Breast epithelium (tissue), 4 donors: ENCODE measurements at regions of chr10 and their contacts with region 1.

Region 1: DNA sequence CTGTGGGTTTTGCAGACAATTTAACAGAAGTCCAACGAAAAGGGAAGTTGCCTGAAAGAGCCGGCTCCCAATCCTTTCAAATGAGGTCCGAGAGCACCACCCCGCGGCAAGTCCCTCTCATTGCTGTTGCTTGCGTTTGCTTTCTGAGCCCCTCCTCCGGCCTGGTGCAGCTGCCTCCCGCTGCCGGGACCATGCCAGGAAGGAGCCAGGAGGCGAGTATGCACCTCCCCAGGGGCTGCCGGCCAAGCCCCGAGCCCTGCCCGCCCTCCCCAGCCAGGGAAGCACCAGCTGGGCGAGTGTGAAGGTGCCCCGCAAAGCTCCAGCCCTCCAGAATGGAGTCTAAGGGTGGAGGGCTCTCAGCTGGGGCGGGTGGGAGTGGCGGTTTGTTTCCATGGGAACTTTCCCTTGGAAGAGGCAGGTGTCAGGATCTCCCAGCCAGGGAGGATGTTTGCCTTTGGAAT is 25.8 kb upstream of the PPP2R2D start:
- DNase-seq: peak; percentile 45 to 76
- H3K4me3 ChIP-seq: peak overlapping the region in 1 of 3 donors; percentile 35
- H3K27ac ChIP-seq: no peak overlapping the region
- H3K4me1 ChIP-seq: no peaks in the 10 kb centered on the region
- H3K27me3 ChIP-seq: peaks cover 0 to 36% of the 10 kb centered on the region in 2 donors
- CTCF ChIP-seq: peak in 2 of 3 donors; percentile 45 to 53
- POLR2A ChIP-seq: no peak

Region 2: DNA sequence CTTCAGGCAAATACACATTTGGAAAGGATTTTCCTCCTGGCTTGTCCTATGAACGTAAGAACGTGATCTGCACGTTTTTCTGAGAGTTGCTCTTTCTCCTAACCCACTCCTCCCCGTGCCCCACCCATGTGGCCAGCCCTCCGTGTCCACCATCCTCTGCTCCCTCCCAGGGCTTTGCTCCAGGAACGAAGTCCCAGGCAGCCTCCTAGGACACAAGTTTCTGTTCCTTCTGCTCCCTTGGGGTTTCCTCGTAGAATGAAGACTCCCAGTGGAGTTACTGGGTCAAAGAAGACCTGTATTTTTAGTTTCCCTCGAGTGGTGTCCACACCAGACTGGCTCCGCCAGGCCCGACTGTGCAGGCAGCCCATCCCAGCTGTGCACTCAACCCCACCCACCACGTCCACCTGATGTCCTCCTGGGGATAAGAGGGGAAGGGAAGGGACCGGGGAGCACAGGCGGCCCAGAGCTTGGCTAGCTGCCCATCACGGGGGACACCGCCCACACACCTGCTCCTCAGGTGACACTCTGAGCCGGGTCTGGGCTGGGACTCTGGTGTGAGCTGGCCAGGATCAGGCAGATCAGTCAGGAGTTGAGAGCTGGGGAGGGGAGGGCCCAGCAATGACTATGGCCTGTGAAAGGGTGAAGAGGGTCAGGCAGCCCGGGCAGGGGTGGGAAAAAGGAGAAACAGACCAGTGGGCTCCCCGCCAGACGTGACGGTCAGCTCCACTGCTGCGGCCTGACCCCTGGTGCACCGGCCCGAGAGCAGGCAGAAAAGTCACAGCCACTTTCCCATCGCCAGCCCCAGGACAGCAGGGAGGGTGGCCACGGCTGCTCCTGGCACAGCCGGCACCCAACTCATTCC is 28.6 kb before region 1 on chr10:
- intact Hi-C with region 1: loop called (anchors 1 kb)
- DNase-seq: peak in 1 of 2 donors; percentile 42
- H3K4me3 ChIP-seq: no peak overlapping the region
- H3K27ac ChIP-seq: no peak overlapping the region
- H3K4me1 ChIP-seq: no peaks in the 10 kb centered on the region
- H3K27me3 ChIP-seq: peaks cover 0 to 4% of the 10 kb centered on the region in 2 donors
- CTCF ChIP-seq: no peak
- POLR2A ChIP-seq: no peak

Region 3: DNA sequence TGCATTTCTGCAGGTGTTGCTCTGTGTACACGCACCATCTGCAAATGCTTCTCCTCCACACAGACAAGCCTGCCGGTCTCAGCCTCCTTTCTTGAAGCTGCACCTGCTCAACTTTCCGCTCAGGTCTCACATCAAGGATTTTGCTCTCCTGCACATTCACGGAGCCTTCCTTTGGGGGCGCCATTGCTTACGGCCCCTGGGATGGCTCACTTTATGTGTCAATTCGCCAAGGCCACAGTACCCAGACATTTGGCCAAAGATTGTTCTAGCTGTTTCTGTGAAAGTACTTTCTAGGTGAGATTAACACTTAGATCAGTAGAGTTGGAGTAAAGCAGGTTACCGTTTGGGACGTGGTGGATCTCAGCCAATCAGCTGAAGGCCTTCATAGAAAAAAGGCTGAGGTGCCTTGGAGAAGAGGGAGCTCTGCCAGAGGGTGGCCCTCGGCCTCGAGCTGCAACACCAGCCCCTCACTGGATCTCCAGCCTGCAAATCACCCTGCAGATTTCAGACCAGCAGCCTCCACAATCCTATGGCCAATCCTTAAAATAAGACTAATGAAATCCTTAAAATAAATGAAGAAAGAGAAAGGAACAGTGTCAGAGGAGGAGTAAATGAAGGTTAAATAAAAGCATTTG is 14.1 kb before region 1 on chr10:
- intact Hi-C with region 1: loop called (anchors 2 kb)
- DNase-seq: peak in 1 of 2 donors; percentile 10
- H3K4me3 ChIP-seq: no peak overlapping the region
- H3K27ac ChIP-seq: no peak overlapping the region
- H3K4me1 ChIP-seq: no peaks in the 10 kb centered on the region
- H3K27me3 ChIP-seq: peaks cover 0 to 31% of the 10 kb centered on the region in 2 donors
- CTCF ChIP-seq: no peak
- POLR2A ChIP-seq: no peak